A673 (cell line): ENCODE measurements at regions of chr12 and their contacts with region 1.

Region 1: DNA sequence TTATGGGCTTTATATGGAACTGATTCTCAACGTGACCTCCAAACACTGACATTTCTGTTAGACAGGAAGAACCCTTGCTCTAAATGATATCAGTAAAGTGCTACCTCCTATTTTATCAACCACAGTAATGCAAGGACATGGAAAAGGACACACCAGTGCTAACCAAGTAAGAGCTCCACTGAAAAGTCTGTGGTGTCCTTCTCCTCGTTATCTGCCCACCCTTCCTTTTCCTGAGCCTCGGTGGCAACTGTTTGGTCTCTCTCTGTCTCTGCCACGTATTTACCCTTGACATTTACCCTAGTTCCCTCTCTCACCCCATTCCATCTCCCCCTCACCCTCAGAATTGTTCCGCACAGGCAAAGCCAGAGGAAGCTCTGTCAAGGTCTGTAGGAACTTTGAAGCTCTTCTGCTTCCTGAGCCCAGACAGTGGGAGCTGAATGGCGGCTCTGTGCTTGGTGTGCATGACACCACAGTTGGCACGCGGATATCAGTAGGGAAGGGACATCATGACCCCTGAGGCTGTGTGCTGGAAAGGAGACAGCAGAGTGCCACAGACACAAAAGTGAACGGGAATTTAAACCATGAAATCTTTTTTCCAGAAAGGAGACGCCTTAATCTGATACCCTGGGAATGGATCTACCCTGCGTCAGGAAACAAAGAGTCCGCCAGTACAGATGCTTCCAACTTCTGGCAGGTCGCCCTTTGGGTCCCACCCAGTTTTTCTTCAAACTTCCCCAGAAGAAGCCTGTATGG is 50.8 kb downstream of the NTN4 start:
- DNase-seq: no peak
- H3K4me3 ChIP-seq: no peak overlapping the region
- H3K27ac ChIP-seq: no peak overlapping the region
- H3K4me1 ChIP-seq: no peaks in the 10 kb centered on the region
- H3K27me3 ChIP-seq: no peaks in the 10 kb centered on the region
- CTCF ChIP-seq: no peak

Region 2: DNA sequence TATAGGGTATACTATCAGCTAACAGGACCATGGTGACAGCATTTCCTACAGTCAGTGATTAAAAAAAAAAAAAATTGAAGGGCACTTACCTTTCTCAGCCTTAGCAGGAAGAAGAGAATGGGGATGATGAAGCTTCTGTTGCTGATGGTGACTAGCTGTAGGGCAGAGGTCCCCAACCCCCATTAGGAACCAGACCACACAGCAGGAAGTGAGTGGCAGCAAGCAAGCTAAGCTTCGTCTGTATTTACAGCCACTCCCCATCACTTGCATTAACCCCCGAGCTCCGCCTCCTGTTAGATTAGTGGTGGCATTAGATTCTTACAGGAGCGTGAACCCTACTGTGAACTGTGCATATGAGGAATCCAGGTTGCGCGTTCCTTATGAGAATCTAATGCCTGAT is 97.2 kb before region 1 on chr12:
- CTCF ChIA-PET with region 1: no interaction called
- POLR2A ChIA-PET with region 1: interaction called, 10 read pairs
- intact Hi-C with region 1: no loop called
- DNase-seq: no peak
- H3K4me3 ChIP-seq: no peak overlapping the region
- H3K27ac ChIP-seq: no peak overlapping the region
- H3K4me1 ChIP-seq: no peaks in the 10 kb centered on the region
- H3K27me3 ChIP-seq: no peaks in the 10 kb centered on the region
- CTCF ChIP-seq: no peak

Region 3: GRCh38 chr12:95956557-95957145 is 216.9 kb after region 1 on chr12:
- CTCF ChIA-PET with region 1: no interaction called
- POLR2A ChIA-PET with region 1: no interaction called
- intact Hi-C with region 1: no loop called
- DNase-seq: no peak
- H3K4me3 ChIP-seq: no peak overlapping the region
- H3K27ac ChIP-seq: no peak overlapping the region
- H3K4me1 ChIP-seq: peaks cover 3% of the 10 kb centered on the region
- H3K27me3 ChIP-seq: no peaks in the 10 kb centered on the region
- CTCF ChIP-seq: no peak